Activated CD4-positive, alpha-beta T cell treated with anti-CD3 and anti-CD28 coated beads, Interleukin-2, amount 10 ng/mL, durations not matched to agents 24 days and 14 days (primary cell): ENCODE measurements at regions of chr9 and their contacts with region 1.

Region 1: DNA sequence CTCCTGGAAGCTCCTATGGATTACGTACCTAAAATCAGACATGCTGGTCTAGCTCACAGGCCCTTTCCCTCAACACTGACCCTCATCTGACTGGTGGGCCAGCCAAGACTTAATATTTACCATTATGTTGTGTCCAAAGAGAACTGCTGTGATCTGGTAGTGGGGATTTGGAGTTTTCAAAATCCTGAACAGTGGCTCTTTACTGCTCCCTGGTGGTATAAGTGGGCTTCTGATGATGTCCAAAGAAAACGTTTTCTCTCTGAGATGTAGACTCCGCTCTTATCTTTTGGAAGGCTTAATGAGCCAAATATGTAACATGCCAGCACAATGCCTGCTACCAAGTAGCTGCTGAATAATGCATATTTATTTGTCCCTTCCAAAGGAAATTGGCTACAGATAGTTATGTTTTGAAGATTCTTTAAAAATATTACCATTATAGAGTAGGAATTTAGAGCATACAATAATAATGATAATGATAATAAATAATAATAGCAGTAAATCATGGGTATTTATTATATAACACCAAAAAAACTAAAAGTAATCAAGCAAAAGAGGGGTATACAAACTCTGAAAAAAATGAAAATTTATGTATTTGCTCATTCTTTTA is 406.6 kb upstream of the TNC start:
- DNase-seq: peak; percentile 76
- H3K4me3 Mint-ChIP-seq: no peak overlapping the region
- H3K27ac Mint-ChIP-seq: no peak overlapping the region
- H3K4me1 Mint-ChIP-seq: no peaks in the 10 kb centered on the region
- H3K27me3 Mint-ChIP-seq: peaks cover 22% of the 10 kb centered on the region

Region 2: DNA sequence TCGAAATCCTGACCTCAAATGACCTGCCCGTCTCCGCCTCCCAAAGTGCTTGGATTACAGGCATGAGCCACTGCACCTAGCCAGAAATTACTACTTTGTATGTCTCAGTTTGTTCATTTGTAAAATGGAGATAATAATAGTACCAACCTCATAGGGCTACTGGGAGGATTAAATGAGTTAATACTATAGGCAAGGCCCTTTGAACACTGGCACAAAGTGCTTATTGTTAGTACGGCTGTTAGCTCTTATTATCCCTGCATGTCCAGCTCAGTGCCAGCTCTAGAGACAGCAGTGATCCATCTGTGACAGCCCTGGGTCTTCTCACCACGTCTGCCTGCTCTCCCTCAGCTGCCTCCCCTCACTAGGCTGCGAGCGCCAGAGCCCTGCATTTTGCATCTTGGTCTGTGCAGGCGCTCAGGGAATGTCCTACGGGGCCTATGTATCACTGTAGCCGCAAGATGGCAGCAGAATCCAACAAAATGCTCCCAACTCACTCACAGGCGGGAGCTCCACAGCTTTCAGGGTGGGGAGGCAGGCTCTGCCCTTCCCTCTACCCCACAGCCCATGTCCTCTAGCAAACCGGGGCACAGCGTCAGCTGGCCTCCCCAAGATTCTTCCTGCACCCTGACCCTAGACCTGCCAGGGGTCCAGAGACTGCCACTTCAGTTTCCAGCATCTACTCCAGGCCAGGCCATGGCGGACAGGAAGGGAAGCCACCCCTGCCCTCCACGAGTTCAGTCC is 1119.1 kb before region 1 on chr9:
- intact Hi-C with region 1: loop called (anchors 10 kb)
- DNase-seq: peak; percentile 94
- H3K4me3 Mint-ChIP-seq: no peak overlapping the region
- H3K27ac Mint-ChIP-seq: peak overlapping the region; percentile 51
- H3K4me1 Mint-ChIP-seq: peaks cover 11% of the 10 kb centered on the region
- H3K27me3 Mint-ChIP-seq: no peaks in the 10 kb centered on the region

Region 3: DNA sequence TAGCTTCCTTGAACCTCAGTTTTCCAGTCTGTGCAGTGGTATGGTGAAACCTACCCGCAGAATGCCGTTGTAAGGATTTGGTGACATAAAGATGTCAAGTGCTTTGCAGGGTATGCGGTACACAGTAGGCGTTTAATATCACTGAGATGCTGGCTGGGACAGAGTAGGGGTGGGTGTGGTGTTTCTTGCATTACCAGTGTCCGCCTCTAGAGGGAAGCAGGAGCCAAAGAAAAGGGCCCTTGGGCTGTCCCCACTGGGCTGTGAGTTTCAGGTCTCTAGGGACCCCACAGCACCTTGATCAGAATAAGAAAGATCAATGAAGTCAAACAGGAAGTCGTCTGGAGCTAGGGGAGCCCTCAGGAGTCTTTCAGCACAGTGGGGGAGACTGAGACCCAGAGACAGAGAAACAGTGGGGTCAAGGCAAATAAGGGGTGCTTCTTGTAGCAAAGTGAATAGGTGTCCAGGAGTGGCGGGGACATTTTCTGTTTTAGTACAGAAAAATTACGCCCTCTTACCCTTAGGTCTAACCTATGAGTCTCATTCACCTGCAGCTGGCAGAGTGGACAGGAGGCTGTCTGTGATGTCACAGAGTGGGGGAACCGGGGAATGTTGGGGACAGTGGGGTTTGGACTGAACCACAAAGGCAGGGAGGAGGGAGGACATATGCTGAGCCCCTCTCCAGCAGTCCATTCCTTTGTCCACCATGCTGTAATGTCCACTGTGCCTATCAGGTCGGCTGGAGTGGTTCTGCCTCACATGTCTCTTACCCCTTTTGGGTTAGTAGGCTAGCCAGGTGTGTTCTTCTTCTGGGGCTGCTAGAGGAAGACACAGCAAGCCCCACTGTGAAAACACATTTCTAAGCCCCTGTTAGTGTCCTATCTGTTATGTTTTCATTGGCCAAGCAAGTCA is 862.2 kb before region 1 on chr9:
- intact Hi-C with region 1: loop called (anchors 1 kb)
- DNase-seq: peak; percentile 91
- H3K4me3 Mint-ChIP-seq: no peak overlapping the region
- H3K27ac Mint-ChIP-seq: no peak overlapping the region
- H3K4me1 Mint-ChIP-seq: peaks cover 13% of the 10 kb centered on the region
- H3K27me3 Mint-ChIP-seq: peaks cover 14% of the 10 kb centered on the region

Region 4: GRCh38 chr9:115013998-115014397 is 510.6 kb before region 1 on chr9:
- intact Hi-C with region 1: loop called (anchors 10 kb)
- DNase-seq: peak; percentile 93
- H3K4me3 Mint-ChIP-seq: peak overlapping the region; percentile 18
- H3K27ac Mint-ChIP-seq: peak overlapping the region; percentile 77
- H3K4me1 Mint-ChIP-seq: peaks cover 55% of the 10 kb centered on the region
- H3K27me3 Mint-ChIP-seq: peaks cover 2% of the 10 kb centered on the region